ENCODE measurements at regions of chr14 and their contacts with region 1.

Region 1: DNA sequence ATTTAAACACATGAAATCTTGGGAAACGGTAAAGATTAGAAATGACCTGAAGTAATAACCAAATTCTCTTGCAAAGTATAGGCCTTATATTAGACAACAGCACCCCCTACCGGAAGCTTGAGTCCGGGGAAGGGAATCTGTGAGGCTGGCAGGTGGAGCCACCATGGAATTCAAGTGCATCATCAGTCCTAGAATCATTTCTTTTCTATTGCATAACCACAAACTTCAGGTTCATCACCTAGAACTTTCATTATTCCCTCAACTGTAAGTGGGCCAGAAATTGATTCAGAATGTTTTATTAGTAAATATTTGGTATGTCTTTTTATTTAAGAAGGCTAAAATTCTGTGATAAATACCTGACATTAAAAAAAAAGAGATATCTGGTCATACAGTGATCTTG is 48.5 kb downstream of the AP5M1 start:
- DNase-seq: peak; percentile 69 to 78
- ATAC-seq: no peak
- H3K4me3 ChIP-seq: no peak overlapping the region
- H3K27ac ChIP-seq: no peak overlapping the region
- H3K4me1 ChIP-seq: no peaks in the 10 kb centered on the region
- H3K27me3 ChIP-seq: no peaks in the 10 kb centered on the region

Region 2: DNA sequence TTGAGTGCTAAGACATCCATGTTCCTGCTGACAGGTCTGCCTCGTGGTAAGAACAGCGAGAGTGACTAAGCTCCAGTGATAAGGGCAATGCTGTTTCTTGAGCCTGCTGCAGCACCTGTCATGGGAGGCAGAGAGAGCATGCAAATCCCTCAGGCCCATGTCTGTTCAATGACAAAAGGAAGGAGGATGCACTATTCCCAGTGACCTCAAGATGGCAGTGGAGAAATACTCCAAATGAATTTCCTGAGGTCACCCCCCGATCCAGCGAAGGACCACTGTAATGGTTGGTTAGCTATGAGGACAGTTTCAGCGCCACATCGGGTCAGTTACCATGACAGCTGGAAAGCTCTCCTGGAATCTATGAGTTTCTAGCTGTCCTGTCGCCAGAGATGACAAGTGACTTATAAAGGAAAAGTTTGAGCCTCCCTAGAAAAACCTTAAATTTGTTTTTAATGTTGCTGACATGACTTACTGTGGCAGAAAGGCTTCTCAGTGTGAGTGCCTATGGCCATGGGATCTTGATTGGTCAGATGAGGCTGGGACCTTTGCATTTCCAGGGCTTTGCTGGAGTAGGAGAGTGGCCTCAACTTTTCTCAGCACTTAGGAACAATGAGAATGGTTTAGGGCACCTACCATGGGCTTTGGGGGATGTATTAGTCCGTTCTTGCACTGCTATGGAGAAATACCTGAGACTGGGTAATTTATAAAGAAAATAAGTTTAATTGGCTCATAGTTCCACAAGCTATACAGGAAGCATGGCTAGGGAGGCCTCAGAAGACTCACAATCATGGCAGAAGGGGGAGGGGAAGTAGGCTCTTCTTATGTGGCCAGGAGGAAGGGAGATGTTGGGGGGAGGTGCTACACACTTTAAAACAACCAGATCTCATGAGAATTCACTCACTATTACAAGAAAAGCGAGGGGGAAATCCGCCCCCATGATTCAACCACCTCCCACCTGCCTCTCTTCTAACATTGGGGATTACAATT is 825.7 kb before region 1 on chr14:
- intact Hi-C with region 1: loop called (anchors 5 kb)
- DNase-seq: no peak
- ATAC-seq: peak; percentile 56
- H3K4me3 ChIP-seq: no peak overlapping the region
- H3K27ac ChIP-seq: no peak overlapping the region
- H3K4me1 ChIP-seq: peaks cover 0 to 1% of the 10 kb centered on the region in 2 donors
- H3K27me3 ChIP-seq: no peaks in the 10 kb centered on the region

Region 3: DNA sequence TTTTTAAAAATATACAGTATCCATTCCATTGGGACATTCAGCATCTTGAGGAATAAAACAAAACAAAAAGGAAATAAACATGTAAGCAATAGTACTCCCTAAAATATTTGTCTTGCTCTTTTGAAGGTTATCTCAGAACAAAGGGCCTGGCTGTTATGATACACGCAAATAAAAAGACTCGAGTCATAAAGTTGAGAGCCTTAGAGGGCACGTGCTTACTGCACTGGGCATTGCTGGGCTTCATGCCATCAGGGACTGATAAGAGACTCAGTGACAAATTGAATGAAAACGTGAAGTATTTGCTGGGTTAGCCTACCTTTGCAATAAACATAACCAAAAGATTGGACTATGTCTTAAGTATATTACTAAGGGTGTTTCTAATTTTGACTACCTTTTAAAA is 429.7 kb after region 1 on chr14:
- intact Hi-C with region 1: no loop called
- DNase-seq: no peak
- ATAC-seq: no peak
- H3K4me3 ChIP-seq: no peak overlapping the region
- H3K27ac ChIP-seq: no peak overlapping the region
- H3K4me1 ChIP-seq: no peaks in the 10 kb centered on the region
- H3K27me3 ChIP-seq: no peaks in the 10 kb centered on the region